Transverse colon (tissue), 4 donors: ENCODE measurements at regions of chr1 and their contacts with region 1.

Region 1: GRCh38 chr1:28552758-28553663 is at the start of gene TRNAU1AP:
- DNase-seq: peak; percentile 98
- H3K4me3 ChIP-seq: peak within 1 kb of the TSS; percentile 61 to 91 (median 74)
- H3K27ac ChIP-seq: peak within 1 kb of the TSS; percentile 86 to 91 (median 88)
- H3K4me1 ChIP-seq: peaks cover 6 to 32% (median 9%) of the 10 kb centered on the region in 4 donors
- H3K27me3 ChIP-seq: no peaks in the 10 kb centered on the region
- CTCF ChIP-seq: peak in 1 of 5 experiments; percentile 5
- EP300 ChIP-seq: no peak
- POLR2A ChIP-seq: peak; percentile 84
- total RNA-seq, gene TRNAU1AP: 4.1 to 25.4 (median 12.4) TPM

Region 2: DNA sequence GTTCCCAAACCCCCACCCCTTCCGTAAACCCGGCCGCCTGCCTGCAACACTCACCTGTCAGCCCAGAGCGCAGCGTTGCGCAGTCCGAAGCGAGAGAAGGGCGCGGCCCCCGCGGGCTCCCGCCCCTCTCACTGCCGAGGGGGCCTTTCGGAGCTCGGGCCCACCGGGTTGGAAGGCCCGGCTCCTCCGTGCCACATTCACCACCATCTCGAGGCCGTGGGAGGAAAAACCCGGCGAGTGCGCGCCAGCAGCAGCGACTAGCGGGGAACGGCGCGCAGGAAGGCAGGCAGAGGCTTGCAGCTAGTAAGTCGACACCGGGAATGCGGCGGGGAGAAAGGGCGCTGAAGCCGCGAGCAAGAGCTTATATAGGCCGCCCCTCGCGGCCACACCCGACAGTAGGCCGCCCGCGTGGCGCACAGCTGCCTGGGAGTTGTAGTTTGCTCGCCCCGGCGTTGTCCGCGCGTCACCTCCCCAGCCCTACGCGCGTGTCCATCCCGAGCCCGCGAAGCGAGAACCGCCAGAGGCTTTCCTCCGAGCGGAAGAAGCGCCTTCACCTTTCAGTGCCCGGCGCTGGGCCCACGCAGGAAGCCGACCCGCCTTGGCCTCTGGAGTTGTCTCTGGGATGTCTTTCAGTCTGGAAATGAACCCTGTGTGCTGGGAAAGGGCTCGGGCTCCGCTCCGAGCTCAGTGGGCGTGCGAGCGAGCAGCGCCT is 28.7 kb after region 1 on chr1:
- in situ Hi-C with region 1: no loop called
- intact Hi-C with region 1: loop called (anchors 1 kb)
- DNase-seq: peak; percentile 97
- H3K4me3 ChIP-seq: peak overlapping the region; percentile 73 to 89 (median 76)
- H3K27ac ChIP-seq: peak overlapping the region; percentile 91 to 98 (median 96)
- H3K4me1 ChIP-seq: peaks cover 11 to 29% (median 21%) of the 10 kb centered on the region in 4 donors
- H3K27me3 ChIP-seq: no peaks in the 10 kb centered on the region
- CTCF ChIP-seq: peak in 2 of 5 experiments; percentile 27 to 44
- EP300 ChIP-seq: no peak
- POLR2A ChIP-seq: peak; percentile 99

Region 3: DNA sequence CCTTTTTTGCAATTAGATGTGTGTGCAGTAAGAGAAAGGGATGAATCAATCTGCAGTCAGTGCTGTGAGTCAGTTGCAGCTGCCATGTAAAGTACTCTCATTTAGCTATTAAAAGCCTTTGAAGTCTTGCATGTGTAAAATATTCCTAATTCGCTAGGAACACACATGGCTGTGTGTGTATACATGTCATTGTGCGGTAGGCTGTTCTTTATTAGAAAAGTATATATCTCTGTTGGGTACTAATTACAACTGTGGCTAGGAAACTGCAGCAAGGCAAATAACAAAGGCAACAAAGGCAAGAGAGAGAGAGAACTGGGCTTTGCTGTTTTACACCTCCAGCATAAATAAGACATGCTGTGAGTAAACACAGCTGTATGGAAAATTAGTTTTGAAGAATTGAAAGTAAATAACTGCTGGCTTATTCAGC is 403.0 kb after region 1 on chr1:
- in situ Hi-C with region 1: no loop called
- intact Hi-C with region 1: no loop called
- DNase-seq: no peak
- H3K4me3 ChIP-seq: no peak overlapping the region
- H3K27ac ChIP-seq: no peak overlapping the region
- H3K4me1 ChIP-seq: no peaks in the 10 kb centered on the region
- H3K27me3 ChIP-seq: no peaks in the 10 kb centered on the region
- CTCF ChIP-seq: no peak
- EP300 ChIP-seq: no peak
- POLR2A ChIP-seq: no peak